Activated naive CD4-positive, alpha-beta T cell treated with anti-CD3 and anti-CD28 coated beads, Interleukin-2, amount 10 ng/mL, durations not matched to agents 7 days and 5 days (primary cell): ENCODE measurements at regions of chr1 and their contacts with region 1.

Region 1: GRCh38 chr1:41416552-41417334 is 55.5 kb downstream of the FOXO6 start:
- DNase-seq: peak; percentile 67
- H3K4me3 Mint-ChIP-seq: no peak overlapping the region
- H3K27ac Mint-ChIP-seq: peak overlapping the region; percentile 60
- H3K4me1 Mint-ChIP-seq: no peaks in the 10 kb centered on the region
- H3K27me3 Mint-ChIP-seq: peaks cover 14% of the 10 kb centered on the region

Region 2: GRCh38 chr1:41268154-41268770 is 148.5 kb before region 1 on chr1:
- CTCF ChIA-PET with region 1: interaction called, 11 read pairs
- DNase-seq: peak; percentile 74
- H3K4me3 Mint-ChIP-seq: no peak overlapping the region
- H3K27ac Mint-ChIP-seq: no peak overlapping the region
- H3K4me1 Mint-ChIP-seq: no peaks in the 10 kb centered on the region
- H3K27me3 Mint-ChIP-seq: peaks cover 28% of the 10 kb centered on the region

Region 3: GRCh38 chr1:41282679-41283317 is 133.9 kb before region 1 on chr1:
- CTCF ChIA-PET with region 1: interaction called, 26 read pairs
- DNase-seq: peak; percentile 38
- H3K4me3 Mint-ChIP-seq: no peak overlapping the region
- H3K27ac Mint-ChIP-seq: no peak overlapping the region
- H3K4me1 Mint-ChIP-seq: no peaks in the 10 kb centered on the region
- H3K27me3 Mint-ChIP-seq: peaks cover 68% of the 10 kb centered on the region

Region 4: DNA sequence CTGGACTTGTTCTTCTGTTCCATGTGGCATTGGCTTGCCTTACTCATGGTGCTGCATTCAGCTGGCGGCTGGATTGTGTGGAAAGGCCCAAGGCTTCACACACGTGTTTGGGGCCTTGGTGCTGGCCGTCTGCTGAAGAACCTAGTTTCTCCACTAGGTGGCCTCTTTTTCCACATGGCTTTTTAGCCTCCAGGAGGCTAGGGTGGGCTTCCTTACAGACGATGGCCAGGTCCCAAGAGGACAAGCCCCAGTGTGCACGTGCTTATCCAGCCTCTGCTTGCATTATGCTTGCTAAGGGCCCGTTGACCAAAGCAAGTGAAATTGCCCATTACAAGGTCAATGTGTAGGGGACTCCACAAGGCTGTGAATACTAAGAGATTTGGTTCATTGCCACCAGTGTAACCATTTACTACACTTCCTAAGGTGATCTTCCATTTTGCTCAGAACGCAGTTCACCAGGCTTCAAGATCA is 103.0 kb before region 1 on chr1:
- CTCF ChIA-PET with region 1: interaction called, 14 read pairs
- DNase-seq: peak; percentile 28
- H3K4me3 Mint-ChIP-seq: no peak overlapping the region
- H3K27ac Mint-ChIP-seq: no peak overlapping the region
- H3K4me1 Mint-ChIP-seq: no peaks in the 10 kb centered on the region
- H3K27me3 Mint-ChIP-seq: peaks cover 13% of the 10 kb centered on the region

Region 5: DNA sequence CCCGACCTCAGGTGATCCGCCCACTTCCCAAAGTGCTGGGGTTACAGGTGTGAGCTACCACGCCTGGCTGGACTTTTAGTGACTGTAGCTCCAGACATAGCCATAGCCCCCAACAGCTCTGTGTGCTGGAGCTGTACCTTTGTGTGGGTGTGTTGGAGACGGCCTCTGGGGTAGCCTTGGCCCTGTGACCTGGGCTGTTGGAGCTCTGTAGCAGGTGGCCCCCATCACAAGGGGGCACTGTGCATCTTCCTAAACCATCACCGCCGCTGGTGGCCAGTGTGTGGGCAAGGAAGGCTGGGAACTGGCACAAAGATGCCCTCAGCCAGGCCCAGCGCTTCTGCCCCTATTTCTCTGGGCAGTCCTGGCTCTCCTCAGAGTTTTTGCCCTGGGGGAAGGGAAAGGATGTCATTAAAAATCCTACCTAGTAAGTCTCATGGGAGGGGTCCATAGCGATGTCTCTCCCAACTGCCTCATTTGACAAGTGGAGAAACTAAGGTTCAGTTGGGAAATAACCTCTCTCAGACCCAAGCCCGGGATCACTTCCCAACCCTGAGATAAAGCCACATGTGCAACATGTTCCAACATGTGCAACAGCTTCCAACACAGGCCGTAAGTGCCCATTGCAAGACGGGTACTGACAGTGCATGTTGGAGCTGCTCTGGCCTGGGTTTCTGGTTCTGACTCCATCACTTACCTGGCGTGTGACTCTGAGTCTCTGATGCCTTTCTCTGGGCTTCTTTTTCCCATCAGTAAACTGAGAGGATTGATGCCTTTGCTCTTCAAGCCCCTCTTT is 93.7 kb before region 1 on chr1:
- CTCF ChIA-PET with region 1: interaction called, 18 read pairs
- DNase-seq: peak; percentile 36
- H3K4me3 Mint-ChIP-seq: no peak overlapping the region
- H3K27ac Mint-ChIP-seq: no peak overlapping the region
- H3K4me1 Mint-ChIP-seq: no peaks in the 10 kb centered on the region
- H3K27me3 Mint-ChIP-seq: peaks cover 13% of the 10 kb centered on the region

Region 6: DNA sequence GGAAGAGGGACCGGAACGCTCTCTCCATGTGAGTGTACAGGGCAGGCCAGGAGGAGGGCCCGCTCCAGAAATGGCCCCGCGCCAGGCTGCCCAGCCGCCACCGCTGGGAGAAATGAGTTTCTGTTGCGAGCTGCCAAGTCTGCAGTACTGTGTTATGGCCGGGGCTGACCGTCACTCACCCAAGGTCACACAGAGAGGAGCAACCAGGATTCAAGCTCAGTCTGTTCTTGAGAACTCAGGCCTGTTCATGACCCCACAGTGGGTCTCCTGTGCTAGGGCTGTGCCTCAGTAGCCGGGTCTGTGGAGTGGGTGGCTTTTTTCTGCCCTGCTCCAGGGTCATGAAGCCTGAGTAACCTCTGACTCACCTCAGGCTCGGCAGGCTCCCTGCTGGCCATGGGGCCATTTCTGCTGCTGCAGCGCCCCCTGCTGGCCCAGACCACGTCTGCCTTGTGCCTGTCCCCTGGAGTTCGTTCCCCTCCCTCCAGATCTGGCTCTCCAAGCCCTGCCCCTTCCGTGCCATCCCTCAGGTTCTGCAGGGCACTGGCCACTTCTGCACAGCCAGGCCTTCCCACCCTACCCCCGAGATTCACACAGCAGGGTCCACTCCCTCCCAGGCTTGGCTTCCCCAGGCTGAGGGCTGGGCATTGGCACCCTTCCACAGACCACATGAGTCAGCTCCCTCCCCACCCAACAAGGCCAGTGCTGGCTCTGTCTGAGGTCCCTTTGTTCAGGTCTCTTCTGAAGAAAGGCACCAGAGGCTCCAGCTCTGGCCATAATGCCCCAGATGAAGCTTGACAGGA is 15.9 kb after region 1 on chr1:
- CTCF ChIA-PET with region 1: interaction called, 19 read pairs
- DNase-seq: peak; percentile 81
- H3K4me3 Mint-ChIP-seq: no peak overlapping the region
- H3K27ac Mint-ChIP-seq: no peak overlapping the region
- H3K4me1 Mint-ChIP-seq: no peaks in the 10 kb centered on the region
- H3K27me3 Mint-ChIP-seq: peaks cover 42% of the 10 kb centered on the region

Region 7: GRCh38 chr1:41496080-41497055 is 79.6 kb after region 1 on chr1:
- CTCF ChIA-PET with region 1: no interaction called
- DNase-seq: peak; percentile 48
- H3K4me3 Mint-ChIP-seq: peak overlapping the region; percentile 46
- H3K27ac Mint-ChIP-seq: no peak overlapping the region
- H3K4me1 Mint-ChIP-seq: peaks cover 7% of the 10 kb centered on the region
- H3K27me3 Mint-ChIP-seq: peaks cover 50% of the 10 kb centered on the region

Region 8: DNA sequence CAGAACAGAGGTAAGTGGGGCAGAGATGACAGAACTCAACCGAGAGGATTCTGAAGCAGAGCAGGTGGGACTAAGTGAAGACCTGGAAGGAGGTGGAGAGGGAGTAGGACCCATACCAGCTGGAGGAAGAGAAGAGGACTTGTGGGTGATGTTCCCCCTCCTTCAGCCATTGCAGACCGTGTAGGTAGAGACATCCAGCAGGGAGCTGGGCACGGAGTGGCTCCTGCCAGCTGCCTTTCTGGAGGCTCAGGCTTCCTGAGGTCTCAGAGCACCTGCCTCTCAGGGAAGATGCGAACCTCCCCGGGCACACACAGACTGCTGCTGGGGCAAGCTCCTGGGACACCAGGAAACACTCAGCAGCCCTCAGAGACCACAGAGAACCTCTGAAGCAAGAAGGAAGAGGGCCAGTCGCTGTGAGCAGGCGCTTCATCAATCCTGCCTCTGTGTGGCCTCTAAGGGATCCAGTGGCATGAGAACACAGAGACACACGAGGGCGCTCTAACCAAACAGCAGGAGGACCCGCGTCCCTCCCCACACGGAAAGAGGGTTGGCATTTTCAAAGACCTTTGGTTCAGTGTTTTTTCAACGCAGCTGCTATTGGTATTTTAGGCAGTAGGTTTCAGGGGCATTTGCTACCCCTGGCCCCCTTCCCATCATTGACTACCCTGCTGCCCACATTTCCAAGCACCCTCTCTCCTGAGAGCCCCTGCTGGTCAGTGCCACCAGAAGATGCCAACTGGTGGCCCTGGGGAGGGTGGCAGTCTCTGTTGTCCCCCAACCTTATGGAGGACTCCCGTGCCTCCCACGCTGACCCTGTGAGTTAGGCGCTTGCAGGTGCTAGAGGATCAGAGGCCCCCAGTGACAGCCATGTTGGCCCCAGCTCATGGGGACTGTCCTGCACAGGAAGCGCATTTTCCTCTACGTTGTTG is 157.3 kb after region 1 on chr1:
- CTCF ChIA-PET with region 1: no interaction called
- DNase-seq: peak; percentile 91
- H3K4me3 Mint-ChIP-seq: no peak overlapping the region
- H3K27ac Mint-ChIP-seq: no peak overlapping the region
- H3K4me1 Mint-ChIP-seq: peaks cover 31% of the 10 kb centered on the region
- H3K27me3 Mint-ChIP-seq: no peaks in the 10 kb centered on the region